ENCODE measurements at regions of chr5 and their contacts with region 1.

Region 1: DNA sequence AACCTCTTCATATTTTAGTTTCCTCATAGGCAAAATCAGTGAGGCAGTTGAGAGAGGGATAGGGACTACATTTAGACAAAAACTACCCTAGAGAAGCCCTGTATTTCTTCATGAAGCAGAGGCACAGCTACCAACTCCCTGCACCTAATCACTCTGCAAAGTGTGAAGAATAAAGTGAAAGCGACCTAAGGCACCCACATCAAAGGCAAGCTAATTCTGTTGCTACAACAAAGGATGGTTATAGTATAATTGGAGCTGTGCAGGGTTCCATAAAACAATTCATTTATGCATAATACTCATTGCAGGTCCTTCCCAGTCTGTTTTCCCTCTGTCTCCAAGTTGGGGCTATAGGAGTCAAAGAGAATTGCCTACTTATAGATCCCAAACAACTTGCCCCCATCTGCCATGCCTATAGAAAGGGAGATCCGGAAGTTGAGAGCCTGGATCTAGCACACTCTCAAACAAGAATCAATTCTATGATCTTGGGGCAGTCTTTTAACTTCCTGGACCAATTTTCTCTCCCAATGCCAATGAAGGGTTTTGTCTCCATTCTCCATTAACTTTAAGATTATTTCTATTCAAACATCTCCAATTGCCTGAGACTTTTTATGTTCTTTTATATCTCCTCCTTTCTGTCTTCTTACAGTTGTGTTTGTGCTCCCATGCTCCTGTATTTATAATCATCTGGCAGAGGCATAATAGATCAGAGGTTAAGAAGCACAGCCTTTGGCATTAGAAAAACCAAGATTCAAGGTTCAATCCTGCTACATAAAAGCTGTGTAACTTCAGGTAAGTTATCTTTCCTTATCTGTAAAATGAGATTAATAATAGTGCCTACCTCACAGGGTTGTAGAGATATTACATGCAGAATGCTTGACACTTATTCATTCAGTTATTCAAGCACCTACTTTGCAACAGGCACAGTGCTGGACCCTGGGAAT is 56.0 kb upstream of the PTGER4 start:
- DNase-seq: peak in 6 of 9 experiments; percentile 2 to 77 (median 48)
- ATAC-seq: peak; percentile 92
- H3K4me3 ChIP-seq: no peak overlapping the region
- H3K4me3 Mint-ChIP-seq: peak overlapping the region; percentile 35
- H3K27ac ChIP-seq: peak overlapping the region in 1 of 2 experiments; percentile 31
- H3K27ac Mint-ChIP-seq: peak overlapping the region; percentile 84
- H3K4me1 ChIP-seq: peaks cover 29% of the 10 kb centered on the region
- H3K4me1 Mint-ChIP-seq: peaks cover 55% of the 10 kb centered on the region
- H3K27me3 ChIP-seq: no peaks in the 10 kb centered on the region
- H3K27me3 Mint-ChIP-seq: no peaks in the 10 kb centered on the region
- CTCF ChIP-seq: no peak

Region 2: GRCh38 chr5:40578501-40579451 is 45.0 kb before region 1 on chr5:
- CTCF ChIA-PET with region 1: no interaction called
- POLR2A ChIA-PET with region 1: no interaction called
- intact Hi-C with region 1: loop called in 1 of 2 experiments (anchors 2 kb)
- DNase-seq: peak in 2 of 9 experiments; percentile 5 to 29
- ATAC-seq: no peak
- H3K4me3 ChIP-seq: no peak overlapping the region
- H3K4me3 Mint-ChIP-seq: peak overlapping the region; percentile 79
- H3K27ac ChIP-seq: no peak overlapping the region
- H3K27ac Mint-ChIP-seq: peak overlapping the region; percentile 49
- H3K4me1 ChIP-seq: peaks cover 9% of the 10 kb centered on the region
- H3K4me1 Mint-ChIP-seq: peaks cover 21% of the 10 kb centered on the region
- H3K27me3 ChIP-seq: no peaks in the 10 kb centered on the region
- H3K27me3 Mint-ChIP-seq: no peaks in the 10 kb centered on the region
- CTCF ChIP-seq: no peak

Region 3: DNA sequence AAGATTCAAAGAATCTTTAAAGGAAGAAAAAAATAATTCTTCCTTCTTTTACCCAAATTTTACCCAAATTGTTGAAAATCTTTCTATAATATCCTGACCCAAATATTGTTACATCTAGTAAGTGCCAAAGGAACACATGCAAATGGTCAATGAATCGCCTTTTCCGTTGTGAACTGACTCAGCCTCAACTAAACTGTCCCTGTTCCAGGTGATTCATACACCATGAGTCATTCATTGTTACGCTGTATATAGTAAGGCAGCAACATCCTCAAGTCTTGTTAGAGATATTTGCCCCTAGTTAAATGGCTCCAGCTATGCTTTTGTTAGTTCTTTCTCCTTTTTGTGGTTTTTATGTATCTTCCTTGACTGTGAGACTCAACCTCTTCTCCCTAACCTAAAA is 65.7 kb after region 1 on chr5:
- CTCF ChIA-PET with region 1: no interaction called
- POLR2A ChIA-PET with region 1: no interaction called
- intact Hi-C with region 1: no loop called
- DNase-seq: peak in 3 of 9 experiments; percentile 32 to 68 (median 51)
- ATAC-seq: peak; percentile 49
- H3K4me3 ChIP-seq: no peak overlapping the region
- H3K4me3 Mint-ChIP-seq: peak overlapping the region; percentile 26
- H3K27ac ChIP-seq: peak overlapping the region in 1 of 2 experiments; percentile 63
- H3K27ac Mint-ChIP-seq: peak overlapping the region; percentile 72
- H3K4me1 ChIP-seq: peaks cover 54% of the 10 kb centered on the region
- H3K4me1 Mint-ChIP-seq: peaks cover 75% of the 10 kb centered on the region
- H3K27me3 ChIP-seq: no peaks in the 10 kb centered on the region
- H3K27me3 Mint-ChIP-seq: no peaks in the 10 kb centered on the region
- CTCF ChIP-seq: no peak